Sigmoid colon (tissue), 7 donors: ENCODE measurements at regions of chr15 and their contacts with region 1.

Region 1: GRCh38 chr15:89760303-89761008 is 9.4 kb upstream of the MESP1 start:
- DNase-seq: peak; percentile 83
- H3K4me3 ChIP-seq: no peak overlapping the region
- H3K27ac ChIP-seq: peak overlapping the region in 3 of 4 donors; percentile 8 to 63 (median 61)
- H3K4me1 ChIP-seq: peaks cover 0 to 14% (median 7%) of the 10 kb centered on the region in 4 donors
- H3K27me3 ChIP-seq: no peaks in the 10 kb centered on the region
- CTCF ChIP-seq: peak; percentile 75 to 95 (median 92)
- EP300 ChIP-seq: no peak
- POLR2A ChIP-seq: no peak

Region 2: DNA sequence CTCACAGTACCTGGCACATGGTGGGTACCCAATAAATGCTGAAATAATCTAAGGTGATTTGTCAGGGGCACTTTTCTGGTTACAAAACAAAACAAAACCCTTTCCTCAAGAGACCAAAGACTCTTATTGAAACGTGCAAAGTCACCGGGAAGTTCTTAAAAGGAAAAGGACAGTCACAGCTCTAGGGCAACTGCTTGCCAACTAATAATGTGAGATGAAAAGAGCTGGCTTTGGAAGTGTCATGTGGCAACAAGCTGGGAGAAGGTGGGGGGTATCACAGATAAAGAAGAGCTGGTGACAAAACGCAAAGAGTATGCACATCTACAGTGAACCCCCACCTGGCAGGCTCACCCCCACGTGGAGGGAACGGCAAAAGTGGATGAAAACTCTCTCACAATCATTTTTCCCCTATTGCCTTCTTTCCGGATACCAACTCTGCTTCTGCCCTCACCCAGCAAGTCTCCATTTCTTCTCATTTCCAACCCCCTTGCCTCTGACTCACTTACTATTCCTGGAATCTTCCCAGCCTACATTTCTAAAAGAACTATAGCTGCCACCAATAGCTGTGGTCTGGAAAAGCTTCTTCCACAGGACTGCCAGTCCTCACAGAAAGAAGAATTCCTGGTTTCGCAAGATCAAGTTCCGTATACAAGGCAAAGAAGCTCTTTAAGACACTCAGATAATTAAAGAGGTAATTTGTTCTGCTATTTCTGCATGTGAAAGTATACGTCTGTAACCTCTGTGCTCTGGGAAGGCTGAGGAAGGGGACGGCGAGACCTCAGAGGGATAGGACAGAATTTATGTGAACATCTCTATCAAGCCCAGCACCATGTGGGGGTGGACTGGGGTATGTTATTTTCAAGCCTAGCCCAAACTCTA is 76.0 kb after region 1 on chr15:
- intact Hi-C with region 1: loop called (anchors 10 kb)
- DNase-seq: no peak
- H3K4me3 ChIP-seq: no peak overlapping the region
- H3K27ac ChIP-seq: peak overlapping the region; percentile 39 to 75 (median 59)
- H3K4me1 ChIP-seq: peaks cover 0 to 32% (median 16%) of the 10 kb centered on the region in 4 donors
- H3K27me3 ChIP-seq: no peaks in the 10 kb centered on the region
- CTCF ChIP-seq: no peak
- EP300 ChIP-seq: no peak
- POLR2A ChIP-seq: no peak